Activated T-helper 2 cell treated with anti-CD3 and anti-CD28 coated beads, Interferon-gamma antibody, Interleukin-2, Interleukin-4, amounts not matched to agents 10 μg/mL and 5 μg/mL and 100 μg/mL, durations not matched to agents 14 hours and 24 hours and 36 hours (primary cell): ENCODE measurements at regions of chr18 and their contacts with region 1.

Region 1: GRCh38 chr18:59846814-59847490 is 52.8 kb upstream of the PMAIP1 start:
- DNase-seq: peak; percentile 10
- H3K4me3 Mint-ChIP-seq: no peak overlapping the region
- H3K27ac Mint-ChIP-seq: peak overlapping the region; percentile 80
- H3K4me1 Mint-ChIP-seq: peaks cover 16% of the 10 kb centered on the region
- H3K27me3 Mint-ChIP-seq: peaks cover 1% of the 10 kb centered on the region

Region 2: DNA sequence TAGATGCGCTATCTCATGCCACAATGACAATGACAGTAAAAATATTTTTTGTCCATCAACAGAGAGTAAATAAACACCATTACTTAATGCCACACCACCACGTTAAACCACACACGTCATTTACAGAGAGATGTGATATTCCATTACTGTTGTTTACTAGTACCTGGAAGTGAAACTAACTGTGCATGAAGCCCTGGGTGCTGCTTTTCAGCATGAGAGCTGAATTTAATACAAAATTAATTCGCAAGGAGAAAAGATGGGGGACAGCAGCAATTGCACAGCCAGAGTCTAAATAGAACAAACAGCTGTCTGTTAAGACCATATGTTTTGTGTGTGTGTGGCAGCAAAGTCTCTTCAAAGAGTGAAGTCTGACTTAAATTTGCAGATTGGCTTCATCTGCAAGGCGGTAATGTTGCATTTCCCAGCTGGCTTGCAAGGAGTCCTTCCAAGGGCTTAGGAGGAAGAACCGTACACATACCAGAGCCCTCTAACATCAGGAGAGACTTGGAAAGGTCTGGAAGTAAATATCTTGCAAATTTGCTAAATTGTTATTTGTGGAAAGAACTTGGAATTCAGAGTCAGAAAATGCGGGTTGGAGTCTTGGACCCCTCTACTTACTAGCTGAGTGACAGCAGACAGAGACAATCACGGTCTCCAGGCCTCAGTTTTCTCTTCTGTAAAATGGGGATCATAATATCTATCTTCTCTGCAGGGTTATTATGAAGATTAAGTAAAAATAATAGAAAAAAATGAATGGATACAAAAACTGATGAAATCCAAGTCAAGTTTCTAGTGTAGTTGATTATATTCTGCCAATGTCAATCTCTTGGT is 1345.7 kb before region 1 on chr18:
- intact Hi-C with region 1: no loop called
- DNase-seq: no peak
- H3K4me3 Mint-ChIP-seq: no peak overlapping the region
- H3K27ac Mint-ChIP-seq: no peak overlapping the region
- H3K4me1 Mint-ChIP-seq: no peaks in the 10 kb centered on the region
- H3K27me3 Mint-ChIP-seq: peaks cover 5% of the 10 kb centered on the region

Region 3: DNA sequence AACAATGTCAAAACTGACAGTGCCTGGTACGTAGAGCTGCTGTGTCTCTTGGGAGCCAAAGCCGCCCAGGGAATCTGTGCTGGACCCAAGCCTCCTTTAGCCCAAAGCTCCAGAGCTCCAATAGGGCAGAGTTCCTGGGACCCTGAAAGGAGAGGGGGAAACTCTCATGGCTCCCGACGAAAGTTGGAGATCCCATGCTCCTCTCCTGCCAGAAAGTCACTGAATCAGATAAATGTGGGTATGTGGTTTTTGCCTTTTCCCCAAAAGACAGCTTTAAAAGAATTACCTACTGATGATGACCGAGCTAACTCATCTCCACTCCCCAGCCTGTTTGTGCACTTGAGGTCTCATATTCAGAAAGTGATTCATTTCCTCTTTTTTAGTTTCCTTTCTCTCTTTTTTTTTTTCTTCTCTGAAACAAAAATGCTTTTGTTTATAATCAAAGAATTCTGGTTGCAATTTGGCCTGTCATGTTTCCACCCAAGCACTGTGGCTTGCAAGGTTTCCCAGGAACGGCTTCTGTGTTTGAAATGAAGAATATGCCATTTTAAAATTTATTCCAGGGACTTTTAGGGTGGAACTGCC is 38.7 kb after region 1 on chr18:
- intact Hi-C with region 1: loop called (anchors 1 kb)
- DNase-seq: peak; percentile 33
- H3K4me3 Mint-ChIP-seq: peak overlapping the region; percentile 21
- H3K27ac Mint-ChIP-seq: peak overlapping the region; percentile 11
- H3K4me1 Mint-ChIP-seq: peaks cover 44% of the 10 kb centered on the region
- H3K27me3 Mint-ChIP-seq: no peaks in the 10 kb centered on the region

Region 4: GRCh38 chr18:59950215-59950944 is 103.4 kb after region 1 on chr18:
- intact Hi-C with region 1: loop called (anchors 5 kb)
- DNase-seq: no peak
- H3K4me3 Mint-ChIP-seq: no peak overlapping the region
- H3K27ac Mint-ChIP-seq: peak overlapping the region; percentile 47
- H3K4me1 Mint-ChIP-seq: peaks cover 37% of the 10 kb centered on the region
- H3K27me3 Mint-ChIP-seq: peaks cover 5% of the 10 kb centered on the region